Activated CD4-positive, alpha-beta memory T cell treated with anti-CD3 and anti-CD28 coated beads for 36 hours (primary cell): ENCODE measurements at regions of chr1 and their contacts with region 1.

Region 1: DNA sequence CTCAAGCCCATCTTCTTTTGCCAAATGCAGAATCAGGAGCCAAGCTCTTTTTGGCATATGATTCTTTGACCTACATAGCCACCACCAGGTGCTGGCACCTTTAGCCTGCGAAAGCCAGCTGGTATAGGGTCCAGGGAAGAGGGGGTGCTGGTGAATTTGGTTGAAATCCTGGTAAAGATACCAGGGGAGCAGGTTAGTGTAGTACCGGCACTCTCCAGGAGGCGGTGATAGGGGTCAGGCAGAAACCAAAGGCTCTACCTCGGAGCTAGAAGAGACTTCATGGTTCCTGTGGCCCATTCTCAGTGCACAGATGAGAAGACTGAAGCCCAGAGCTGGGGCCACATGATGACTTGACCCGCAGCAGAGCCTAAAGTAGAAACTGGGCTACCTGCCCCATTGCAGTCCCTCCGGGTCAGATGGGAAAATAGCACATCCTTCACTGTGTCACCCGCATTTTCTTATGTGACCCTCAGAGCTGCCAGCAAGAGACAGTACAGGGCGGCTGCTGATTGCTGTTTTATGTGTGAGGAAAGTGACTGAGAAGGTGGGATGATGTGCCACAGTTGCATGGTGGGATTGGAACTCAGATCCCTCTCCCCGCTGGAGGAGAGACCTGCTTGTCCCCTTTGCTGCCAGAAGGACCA is 36.0 kb upstream of the IL19 start:
- DNase-seq: peak; percentile 85
- H3K4me3 Mint-ChIP-seq: no peak overlapping the region
- H3K27ac Mint-ChIP-seq: peak overlapping the region; percentile 16
- H3K4me1 Mint-ChIP-seq: peaks cover 57% of the 10 kb centered on the region
- H3K27me3 Mint-ChIP-seq: no peaks in the 10 kb centered on the region

Region 2: DNA sequence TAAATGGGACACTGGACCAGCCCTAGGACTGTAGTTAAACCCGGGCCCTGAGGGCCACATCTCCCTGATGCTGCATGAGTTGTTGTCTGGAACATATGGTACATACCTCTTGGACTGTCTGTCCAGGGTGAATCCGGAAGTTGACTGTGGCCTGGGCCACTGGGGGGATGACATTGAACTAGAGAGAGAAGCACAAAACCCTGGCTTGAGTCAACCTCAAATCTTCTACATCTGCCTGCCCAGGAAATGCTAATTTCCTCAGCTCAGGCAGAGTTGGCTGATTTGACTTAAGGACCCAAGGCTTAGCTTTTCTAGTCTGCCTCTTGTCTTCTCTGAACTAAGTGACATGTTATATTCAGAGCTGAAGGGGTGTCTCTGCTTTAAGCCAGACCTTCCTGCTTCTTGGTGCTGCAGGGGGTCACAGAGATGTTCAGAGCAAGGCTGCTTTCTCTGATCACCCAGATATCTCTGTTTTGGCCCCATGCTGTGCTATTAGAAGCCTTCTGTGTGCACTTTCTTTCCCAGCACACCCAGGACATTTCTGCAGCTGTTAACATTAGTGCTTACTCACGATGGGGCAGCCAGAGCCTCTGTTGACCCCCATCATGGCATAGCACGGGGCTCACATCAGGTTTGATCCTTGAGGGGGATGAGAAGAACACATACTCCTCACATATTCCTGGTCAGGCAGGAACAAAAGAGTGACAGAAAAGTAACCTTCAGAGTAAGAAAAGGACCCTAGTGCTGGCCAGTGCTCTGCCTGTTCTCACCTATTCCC is 894.3 kb before region 1 on chr1:
- CTCF ChIA-PET with region 1: no interaction called
- POLR2A ChIA-PET with region 1: no interaction called
- intact Hi-C with region 1: no loop called
- DNase-seq: no peak
- H3K4me3 Mint-ChIP-seq: no peak overlapping the region
- H3K27ac Mint-ChIP-seq: no peak overlapping the region
- H3K4me1 Mint-ChIP-seq: no peaks in the 10 kb centered on the region
- H3K27me3 Mint-ChIP-seq: no peaks in the 10 kb centered on the region

Region 3: GRCh38 chr1:206716870-206717673 is 17.5 kb before region 1 on chr1:
- CTCF ChIA-PET with region 1: interaction called, 11 read pairs
- POLR2A ChIA-PET with region 1: interaction called, 3 read pairs
- intact Hi-C with region 1: no loop called
- DNase-seq: peak; percentile 45
- H3K4me3 Mint-ChIP-seq: no peak overlapping the region
- H3K27ac Mint-ChIP-seq: peak overlapping the region; percentile 61
- H3K4me1 Mint-ChIP-seq: peaks cover 83% of the 10 kb centered on the region
- H3K27me3 Mint-ChIP-seq: no peaks in the 10 kb centered on the region

Region 4: GRCh38 chr1:206766251-206766856 is 31.7 kb after region 1 on chr1:
- CTCF ChIA-PET with region 1: interaction called, 123 read pairs
- POLR2A ChIA-PET with region 1: interaction called, 26 read pairs
- intact Hi-C with region 1: loop called (anchors 1 kb)
- DNase-seq: peak; percentile 84
- H3K4me3 Mint-ChIP-seq: peak overlapping the region; percentile 44
- H3K27ac Mint-ChIP-seq: peak overlapping the region; percentile 68
- H3K4me1 Mint-ChIP-seq: peaks cover 69% of the 10 kb centered on the region
- H3K27me3 Mint-ChIP-seq: peaks cover 6% of the 10 kb centered on the region

Region 5: GRCh38 chr1:206797534-206798383 is 63.1 kb after region 1 on chr1:
- CTCF ChIA-PET with region 1: interaction called, 315 read pairs
- POLR2A ChIA-PET with region 1: interaction called, 30 read pairs
- intact Hi-C with region 1: loop called (anchors 1 kb)
- DNase-seq: peak; percentile 53
- H3K4me3 Mint-ChIP-seq: peak overlapping the region; percentile 42
- H3K27ac Mint-ChIP-seq: no peak overlapping the region
- H3K4me1 Mint-ChIP-seq: peaks cover 71% of the 10 kb centered on the region
- H3K27me3 Mint-ChIP-seq: peaks cover 16% of the 10 kb centered on the region

Region 6: DNA sequence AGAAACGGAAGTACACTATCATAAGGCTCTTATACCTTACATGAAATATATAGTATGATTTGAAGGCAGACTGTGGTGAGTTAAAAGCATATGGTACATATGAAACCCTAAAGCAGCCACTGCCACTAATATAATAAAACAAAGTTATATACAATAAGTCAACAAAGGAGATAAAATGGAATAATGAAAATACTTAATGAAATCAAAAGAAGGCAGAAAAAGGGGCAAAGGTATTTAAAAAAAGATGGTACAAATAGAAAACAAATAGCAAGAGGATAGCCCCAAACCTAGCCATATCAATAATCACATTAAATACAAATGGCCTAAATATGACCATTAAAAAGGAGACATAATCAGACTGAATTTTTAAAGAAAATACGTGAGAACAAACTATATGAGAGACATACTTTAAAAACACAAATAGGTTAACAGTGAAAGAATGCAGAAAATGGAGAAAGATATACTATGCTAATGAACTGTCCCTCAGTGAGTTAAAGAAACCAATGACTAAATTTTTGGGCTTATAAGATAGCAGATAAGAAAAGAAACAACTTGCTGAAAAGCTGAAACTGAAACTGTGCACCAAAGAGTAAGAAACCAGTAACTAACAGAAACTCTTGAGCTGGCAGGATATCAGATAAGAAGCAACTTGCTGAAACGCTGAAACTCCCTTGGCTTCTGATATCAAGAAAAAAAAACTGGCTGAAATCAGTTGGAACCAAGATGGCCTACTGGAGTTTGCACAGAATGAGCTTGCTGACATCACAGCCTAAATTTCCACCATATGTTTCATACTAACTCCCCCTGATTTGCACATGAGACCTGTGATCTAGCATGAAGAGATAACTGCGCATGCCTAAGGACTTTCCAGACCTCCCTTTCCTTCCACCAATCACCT is 82.0 kb after region 1 on chr1:
- CTCF ChIA-PET with region 1: interaction called, 315 read pairs
- POLR2A ChIA-PET with region 1: interaction called, 5 read pairs
- intact Hi-C with region 1: no loop called
- DNase-seq: peak; percentile 43
- H3K4me3 Mint-ChIP-seq: peak overlapping the region; percentile 20
- H3K27ac Mint-ChIP-seq: peak overlapping the region; percentile 77
- H3K4me1 Mint-ChIP-seq: peaks cover 26% of the 10 kb centered on the region
- H3K27me3 Mint-ChIP-seq: no peaks in the 10 kb centered on the region

Region 7: DNA sequence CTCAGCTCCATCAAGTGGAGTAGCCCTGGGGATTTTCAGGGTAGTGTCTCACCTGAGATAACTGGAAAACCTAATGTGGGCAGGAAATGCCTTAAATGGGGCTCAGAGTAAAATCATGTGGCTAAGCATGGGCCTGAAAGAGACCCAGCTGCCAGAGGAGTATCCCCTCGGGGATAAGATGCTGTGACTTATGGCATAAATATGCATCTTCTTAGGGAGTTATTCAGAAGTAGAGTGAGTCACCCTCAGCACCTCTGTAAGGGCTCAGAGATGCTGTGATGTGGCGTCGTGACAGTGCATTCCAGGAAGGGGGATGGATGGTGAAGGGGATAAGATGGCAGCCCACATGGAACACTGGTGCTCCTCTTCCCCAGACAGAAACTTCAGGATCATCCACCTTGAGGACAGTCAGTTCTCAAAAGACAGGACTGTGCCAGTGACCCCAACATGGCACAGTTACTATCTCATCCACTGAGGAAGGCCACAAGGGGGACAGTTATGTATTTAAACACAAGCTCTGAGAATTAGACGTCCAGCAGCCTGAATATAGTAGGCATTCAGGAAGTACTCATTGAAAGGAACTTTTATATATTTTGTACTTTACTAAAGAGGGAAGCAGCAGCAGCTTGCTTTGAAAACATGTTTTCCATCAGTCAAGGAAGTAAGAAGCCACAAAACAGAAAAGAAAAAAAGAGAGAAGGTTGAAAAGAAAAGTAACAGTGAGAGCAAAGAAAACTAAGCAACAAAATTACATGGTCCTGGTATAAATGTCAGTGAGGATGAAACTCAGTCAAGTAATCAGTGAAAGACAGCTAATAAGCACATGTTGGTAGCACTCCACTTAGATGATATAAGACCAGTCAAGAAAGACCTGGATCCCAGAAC is 170.9 kb after region 1 on chr1:
- CTCF ChIA-PET with region 1: interaction called, 26 read pairs
- POLR2A ChIA-PET with region 1: interaction called, 5 read pairs
- intact Hi-C with region 1: no loop called
- DNase-seq: peak; percentile 74
- H3K4me3 Mint-ChIP-seq: peak overlapping the region; percentile 33
- H3K27ac Mint-ChIP-seq: peak overlapping the region; percentile 83
- H3K4me1 Mint-ChIP-seq: peaks cover 69% of the 10 kb centered on the region
- H3K27me3 Mint-ChIP-seq: no peaks in the 10 kb centered on the region

Region 8: DNA sequence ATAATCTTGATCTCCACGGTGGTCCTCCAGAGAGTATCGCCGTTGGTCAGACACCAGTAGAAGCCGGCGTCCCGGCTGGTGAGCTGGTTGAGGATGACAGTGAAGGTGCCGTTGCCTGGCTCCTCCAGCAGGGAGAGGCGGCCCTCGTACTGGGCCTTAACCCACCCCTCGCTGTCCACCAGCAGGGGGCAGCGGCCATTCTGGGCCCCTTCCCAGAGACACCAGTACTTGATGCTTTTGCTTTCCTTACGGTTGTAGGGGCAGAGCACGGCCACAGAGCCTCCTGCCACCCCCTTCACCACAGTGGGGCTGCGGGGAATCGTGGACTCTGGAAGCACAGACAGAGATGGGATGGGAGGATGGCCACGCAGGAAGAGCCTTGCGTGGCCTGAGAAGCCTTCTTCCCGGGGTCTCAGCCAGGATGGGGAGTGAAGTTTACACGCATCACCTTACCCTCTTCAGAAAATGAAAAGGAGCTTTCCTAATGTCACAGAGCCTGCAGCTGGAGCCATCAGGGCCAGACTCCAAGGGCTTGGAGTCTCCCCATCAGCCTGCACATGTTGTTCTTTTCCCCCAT is 201.0 kb after region 1 on chr1:
- CTCF ChIA-PET with region 1: interaction called, 27 read pairs
- POLR2A ChIA-PET with region 1: no interaction called
- intact Hi-C with region 1: no loop called
- DNase-seq: peak; percentile 71
- H3K4me3 Mint-ChIP-seq: no peak overlapping the region
- H3K27ac Mint-ChIP-seq: no peak overlapping the region
- H3K4me1 Mint-ChIP-seq: peaks cover 15% of the 10 kb centered on the region
- H3K27me3 Mint-ChIP-seq: no peaks in the 10 kb centered on the region